H1 (cell line): ENCODE measurements at regions of chr19 and their contacts with region 1.

Region 1: DNA sequence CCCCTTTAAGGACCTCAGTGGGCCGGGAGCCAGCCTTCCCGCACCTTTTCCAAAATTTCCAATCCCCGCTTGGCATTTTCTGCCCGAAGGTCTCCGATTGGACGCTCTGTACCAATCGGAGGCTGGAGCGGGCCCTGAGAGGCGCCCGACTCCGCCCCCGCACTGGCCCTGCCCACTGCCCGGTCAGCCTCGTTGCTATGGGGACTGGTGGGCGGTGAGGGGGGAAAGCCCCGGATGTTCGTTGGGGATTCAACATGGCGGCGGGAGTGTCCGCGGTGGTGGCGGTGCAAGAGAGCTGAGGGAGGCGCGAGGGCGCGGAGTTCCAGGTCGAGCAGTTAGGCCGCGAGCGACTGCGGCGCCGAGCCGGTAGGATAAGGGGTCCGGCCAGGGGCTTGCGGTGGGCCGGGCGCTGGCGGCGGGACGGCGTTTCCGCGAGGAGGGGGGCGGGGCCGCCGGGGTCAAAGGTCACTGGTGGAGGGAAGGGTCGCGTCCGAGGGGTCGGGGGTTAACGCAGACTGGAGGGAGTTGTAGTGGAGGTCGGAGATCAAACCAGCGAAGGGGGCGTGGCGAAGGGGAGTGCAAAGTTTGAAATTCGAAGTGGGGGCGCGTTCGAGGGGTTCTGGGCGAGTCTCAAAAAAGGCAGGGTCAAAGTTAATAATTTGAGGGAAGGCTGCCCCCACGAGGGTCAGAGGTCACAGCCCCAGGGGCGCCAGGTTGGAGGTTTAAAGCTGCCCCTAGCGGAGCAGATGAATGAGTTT is at the start of gene PAK4:
- DNase-seq: peak; percentile 84 to 98
- H3K4me3 ChIP-seq: peak within 1 kb of the TSS; percentile 73 to 94 (median 78)
- H3K27ac ChIP-seq: peak within 1 kb of the TSS; percentile 62; the same call in 1 of the 2 replicates
- H3K4me1 ChIP-seq: peaks cover 0 to 14% (median 6%) of the 10 kb centered on the region in 4 experiments; a peak in 6 of 7 replicates
- H3K27me3 ChIP-seq: no peaks in the 10 kb centered on the region
- CTCF ChIP-seq: no peak
- EP300 ChIP-seq: no peak
- POLR2A ChIP-seq: peak in 1 of 2 experiments; percentile 67; a peak in 1 of 3 replicates
- RAD21 ChIP-seq: no peak
- total RNA-seq, gene PAK4: 64.4 and 67.6 TPM in 2 replicates

Region 2: DNA sequence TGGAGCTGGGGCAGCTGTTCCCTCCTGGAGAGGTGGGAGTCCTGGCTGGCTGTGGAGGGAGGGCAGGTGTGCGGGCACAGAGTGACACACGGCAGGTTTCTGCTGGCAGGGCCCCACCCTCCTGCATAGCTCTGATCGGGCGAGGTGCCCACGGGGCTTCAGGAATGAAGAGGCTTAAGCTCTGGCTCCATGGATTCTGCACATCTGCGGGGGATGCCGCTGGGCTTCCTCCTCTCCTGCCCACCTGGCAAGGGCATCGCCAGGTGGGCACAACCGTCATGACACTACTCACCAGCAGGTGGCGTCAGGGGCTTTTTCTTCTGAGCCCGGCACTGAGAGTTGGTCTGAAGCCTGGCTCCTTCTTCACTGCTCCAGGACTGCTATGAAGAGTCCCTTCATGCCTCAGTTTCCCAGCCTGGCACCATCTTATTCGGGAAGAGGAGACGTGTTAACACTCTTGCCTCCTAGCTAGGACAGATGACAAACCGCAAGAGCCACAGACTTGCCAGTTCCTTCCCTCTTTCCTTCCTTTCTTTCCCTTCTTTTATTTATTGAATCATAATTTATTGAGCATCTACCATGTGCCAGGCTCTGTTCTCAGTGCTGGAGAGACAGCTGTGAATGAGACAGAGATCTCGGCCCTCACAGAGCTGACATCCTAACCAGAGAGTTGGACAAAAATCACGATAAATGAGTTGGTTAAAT is 15.3 kb before region 1 on chr19:
- CTCF ChIA-PET with region 1: interaction called, 14 read pairs
- POLR2A ChIA-PET with region 1: no interaction called
- DNase-seq: peak in 1 of 2 experiments; percentile 92
- H3K4me3 ChIP-seq: no peak overlapping the region
- H3K27ac ChIP-seq: no peak overlapping the region
- H3K4me1 ChIP-seq: peaks cover 0 to 5% (median 0%) of the 10 kb centered on the region in 4 experiments; a peak in 3 of 7 replicates
- H3K27me3 ChIP-seq: no peaks in the 10 kb centered on the region
- CTCF ChIP-seq: peak; percentile 79 to 87 (median 82)
- EP300 ChIP-seq: no peak
- POLR2A ChIP-seq: no peak
- RAD21 ChIP-seq: peak; percentile 73 to 82

Region 3: GRCh38 chr19:39144245-39145071 is 18.7 kb after region 1 on chr19:
- CTCF ChIA-PET with region 1: interaction called, 17 read pairs
- POLR2A ChIA-PET with region 1: interaction called, 9 read pairs
- DNase-seq: no peak
- H3K4me3 ChIP-seq: no peak overlapping the region
- H3K27ac ChIP-seq: no peak overlapping the region
- H3K4me1 ChIP-seq: peaks cover 26 to 52% (median 36%) of the 10 kb centered on the region in 4 experiments
- H3K27me3 ChIP-seq: no peaks in the 10 kb centered on the region
- CTCF ChIP-seq: peak in 1 of 3 experiments; percentile 7; a peak in 1 of 4 replicates
- EP300 ChIP-seq: no peak
- POLR2A ChIP-seq: no peak
- RAD21 ChIP-seq: peak; percentile 19 to 23; a peak in 2 of 4 replicates

Region 4: DNA sequence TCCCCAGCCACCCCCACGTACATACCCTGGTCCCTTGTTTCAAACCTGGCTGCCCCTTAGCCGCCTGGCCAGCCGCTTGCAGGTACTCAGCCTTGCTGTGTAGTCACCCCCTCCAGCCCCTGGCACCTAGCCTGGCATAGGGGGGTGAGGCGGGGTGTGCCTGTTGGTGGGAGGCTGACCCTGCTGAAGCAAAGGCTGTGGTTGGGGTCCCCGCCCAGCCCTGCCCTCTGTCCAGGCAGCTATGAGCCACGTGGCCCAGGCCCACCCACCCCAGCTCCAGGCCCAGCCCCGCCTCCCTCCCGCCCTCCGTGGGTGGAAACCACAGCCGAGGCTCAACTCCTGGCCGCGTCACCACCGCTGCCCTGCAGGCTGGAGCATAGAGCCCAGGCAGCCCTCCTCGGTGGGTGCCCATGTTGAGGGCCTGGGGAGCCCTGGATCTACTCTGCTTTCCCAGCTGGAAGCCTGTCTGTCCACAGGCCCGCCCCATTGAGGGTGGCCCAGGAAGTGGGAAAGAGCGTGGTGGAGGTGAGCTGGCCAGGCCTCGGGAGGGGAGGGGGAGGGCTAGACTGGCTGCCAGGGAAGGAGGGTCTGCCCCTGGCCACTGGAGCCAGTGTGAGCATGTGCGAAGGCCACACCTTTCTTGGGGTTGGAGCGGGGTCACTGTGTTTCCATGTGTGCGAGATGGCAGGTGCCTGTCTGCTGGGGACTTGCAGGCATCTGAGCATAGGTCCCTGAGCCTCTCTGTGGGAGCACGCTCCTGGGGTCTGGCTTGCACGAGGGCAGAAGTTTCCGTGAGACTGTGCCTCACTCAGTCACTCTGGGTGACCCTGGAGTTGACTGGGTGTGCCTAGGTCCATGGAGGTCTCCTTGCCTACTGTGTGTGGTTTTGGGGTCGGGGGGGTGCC is 30.8 kb after region 1 on chr19:
- CTCF ChIA-PET with region 1: interaction called, 14 read pairs
- POLR2A ChIA-PET with region 1: interaction called, 4 read pairs
- DNase-seq: no peak
- H3K4me3 ChIP-seq: no peak overlapping the region
- H3K27ac ChIP-seq: no peak overlapping the region
- H3K4me1 ChIP-seq: peaks cover 4 to 39% (median 20%) of the 10 kb centered on the region in 4 experiments
- H3K27me3 ChIP-seq: peaks cover 0 to 1% (median 0%) of the 10 kb centered on the region in 4 experiments; a peak in 1 of 7 replicates
- CTCF ChIP-seq: no peak
- EP300 ChIP-seq: no peak
- POLR2A ChIP-seq: no peak
- RAD21 ChIP-seq: no peak

Region 5: DNA sequence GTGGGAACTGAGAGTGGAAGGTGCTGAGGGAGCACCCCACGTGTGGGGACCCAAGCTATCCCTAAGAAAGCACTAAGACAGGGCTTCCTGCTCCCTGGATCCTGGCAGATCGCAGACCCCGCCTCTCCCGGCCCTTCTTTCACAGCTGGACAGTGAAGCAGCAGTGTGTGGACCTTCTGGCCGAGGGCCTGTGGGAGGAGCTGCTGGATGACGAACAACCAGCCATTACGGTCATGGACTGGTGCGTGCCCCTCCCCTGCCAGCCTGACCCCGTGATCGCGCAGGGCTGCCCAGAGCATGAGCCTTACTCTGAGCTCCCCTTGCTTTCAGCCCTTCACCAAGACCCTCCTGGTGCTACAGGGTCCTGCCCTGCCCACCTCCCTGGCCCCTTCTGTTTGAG is 73.3 kb after region 1 on chr19:
- CTCF ChIA-PET with region 1: interaction called, 22 read pairs
- POLR2A ChIA-PET with region 1: interaction called, 5 read pairs
- DNase-seq: no peak
- H3K4me3 ChIP-seq: no peak overlapping the region
- H3K27ac ChIP-seq: no peak overlapping the region
- H3K4me1 ChIP-seq: peaks cover 0 to 9% (median 6%) of the 10 kb centered on the region in 4 experiments; a peak in 5 of 7 replicates
- H3K27me3 ChIP-seq: peaks cover 13 to 33% (median 33%) of the 10 kb centered on the region in 4 experiments
- CTCF ChIP-seq: no peak
- EP300 ChIP-seq: no peak
- POLR2A ChIP-seq: no peak
- RAD21 ChIP-seq: no peak